PC-9 (cell line): ENCODE measurements at regions of chr6 and their contacts with region 1.

Region 1: DNA sequence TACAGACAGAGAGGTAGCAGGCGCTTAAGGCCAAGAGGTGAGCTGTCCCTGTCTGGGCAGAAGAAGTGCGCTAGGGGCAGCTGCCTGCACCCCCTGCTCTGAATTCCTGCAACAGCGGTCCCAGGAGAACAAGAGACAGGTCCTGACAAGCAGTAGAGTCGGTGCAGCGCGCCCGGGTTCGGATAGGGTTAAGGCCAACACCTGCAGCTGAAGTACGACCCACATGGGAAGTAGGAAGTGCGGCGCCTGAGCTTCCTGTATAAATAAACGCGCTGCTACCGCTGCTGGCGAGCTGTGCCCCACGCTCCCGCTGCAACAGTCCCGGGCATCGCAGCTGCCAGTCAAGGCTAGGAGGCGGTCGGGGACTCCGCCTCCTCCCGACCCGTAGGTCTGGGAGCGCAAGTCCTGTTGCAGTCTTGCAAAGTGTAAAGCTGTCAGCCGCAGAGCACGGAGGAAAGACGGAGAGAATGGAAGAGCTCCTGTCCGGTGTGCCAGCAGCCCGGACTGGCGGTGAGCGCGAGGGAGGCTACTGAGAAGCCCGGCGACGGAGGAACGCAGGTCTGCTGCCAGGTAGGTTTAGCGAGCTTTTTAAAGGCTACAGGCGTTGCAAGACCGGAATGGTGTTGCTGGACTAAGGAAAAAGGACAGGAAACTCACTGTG is at the start of gene RNF144B:
- DNase-seq: peak; percentile 87 to 89
- H3K4me3 ChIP-seq: peak within 1 kb of the TSS; percentile 80
- H3K27ac ChIP-seq: peak within 1 kb of the TSS; percentile 76
- H3K4me1 ChIP-seq: peaks cover 39% of the 10 kb centered on the region
- H3K27me3 ChIP-seq: no peaks in the 10 kb centered on the region
- CTCF ChIP-seq: no peak
- total RNA-seq, gene RNF144B: 26.2 and 34.5 TPM in 2 replicates

Region 2: DNA sequence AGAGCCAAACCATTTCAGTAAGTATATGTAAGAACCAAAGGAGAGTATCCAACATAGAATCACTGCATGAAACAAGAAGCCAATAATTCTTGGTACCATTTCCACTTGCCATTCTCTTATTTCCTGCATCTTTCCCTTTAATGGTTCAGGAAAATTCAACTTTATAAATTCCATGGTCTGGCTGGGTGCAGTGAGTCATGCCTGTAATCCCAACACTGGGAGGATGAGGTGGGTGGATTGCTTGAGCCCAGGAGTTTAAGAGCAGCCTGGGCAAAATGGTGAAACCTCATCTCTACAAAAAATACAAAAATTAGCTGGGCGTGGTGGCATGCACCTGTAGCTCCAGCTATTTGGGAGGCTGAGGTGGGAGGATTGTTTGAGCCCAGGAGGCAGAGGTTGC is 285.9 kb before region 1 on chr6:
- CTCF ChIA-PET with region 1: no interaction called
- POLR2A ChIA-PET with region 1: no interaction called
- intact Hi-C with region 1: no loop called
- DNase-seq: no peak
- H3K4me3 ChIP-seq: no peak overlapping the region
- H3K27ac ChIP-seq: no peak overlapping the region
- H3K4me1 ChIP-seq: peaks cover 5% of the 10 kb centered on the region; the same call in 1 of the 2 replicates
- H3K27me3 ChIP-seq: no peaks in the 10 kb centered on the region
- CTCF ChIP-seq: no peak

Region 3: GRCh38 chr6:18323935-18324705 is 63.1 kb before region 1 on chr6:
- CTCF ChIA-PET with region 1: interaction called, 4 read pairs
- POLR2A ChIA-PET with region 1: no interaction called
- intact Hi-C with region 1: loop called (anchors 2 kb)
- DNase-seq: peak; percentile 27 to 51
- H3K4me3 ChIP-seq: no peak overlapping the region
- H3K27ac ChIP-seq: no peak overlapping the region
- H3K4me1 ChIP-seq: no peaks in the 10 kb centered on the region
- H3K27me3 ChIP-seq: no peaks in the 10 kb centered on the region
- CTCF ChIP-seq: peak; percentile 85

Region 4: DNA sequence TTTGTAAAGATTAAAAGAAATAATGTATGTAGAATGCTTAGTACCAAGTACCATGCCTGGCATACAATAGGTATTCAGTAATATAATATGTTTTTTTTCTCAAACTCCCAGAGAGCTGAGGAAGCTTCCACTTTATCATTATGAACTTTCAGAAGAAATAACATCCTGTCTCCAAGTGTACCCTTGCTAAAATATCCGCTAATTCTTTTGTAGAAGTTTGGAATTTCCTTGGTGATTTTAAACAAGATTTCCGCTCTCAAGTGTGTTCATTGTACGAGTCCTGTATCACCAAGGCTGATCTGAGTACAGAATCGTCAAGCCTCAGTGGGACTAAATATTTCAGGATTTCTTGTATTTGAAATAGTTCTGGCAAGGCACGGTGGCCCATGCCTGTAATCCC is 16.2 kb before region 1 on chr6:
- CTCF ChIA-PET with region 1: no interaction called
- POLR2A ChIA-PET with region 1: interaction called, 18 read pairs
- intact Hi-C with region 1: no loop called
- DNase-seq: no peak
- H3K4me3 ChIP-seq: no peak overlapping the region
- H3K27ac ChIP-seq: no peak overlapping the region
- H3K4me1 ChIP-seq: peaks cover 4% of the 10 kb centered on the region; the same call in 1 of the 2 replicates
- H3K27me3 ChIP-seq: no peaks in the 10 kb centered on the region
- CTCF ChIP-seq: no peak

Region 5: GRCh38 chr6:18425197-18425596 is 38.0 kb after region 1 on chr6:
- CTCF ChIA-PET with region 1: no interaction called
- POLR2A ChIA-PET with region 1: interaction called, 5 read pairs
- intact Hi-C with region 1: loop called (anchors 1 kb)
- DNase-seq: peak; percentile 72 to 80
- H3K4me3 ChIP-seq: no peak overlapping the region
- H3K27ac ChIP-seq: peak overlapping the region; percentile 27
- H3K4me1 ChIP-seq: peaks cover 29% of the 10 kb centered on the region
- H3K27me3 ChIP-seq: no peaks in the 10 kb centered on the region
- CTCF ChIP-seq: no peak

Region 6: GRCh38 chr6:18473755-18474154 is 86.6 kb after region 1 on chr6:
- CTCF ChIA-PET with region 1: no interaction called
- POLR2A ChIA-PET with region 1: no interaction called
- intact Hi-C with region 1: no loop called
- DNase-seq: no peak
- H3K4me3 ChIP-seq: no peak overlapping the region
- H3K27ac ChIP-seq: no peak overlapping the region
- H3K4me1 ChIP-seq: no peaks in the 10 kb centered on the region
- H3K27me3 ChIP-seq: no peaks in the 10 kb centered on the region
- CTCF ChIP-seq: no peak

Region 7: GRCh38 chr6:18491308-18492045 is 104.3 kb after region 1 on chr6:
- CTCF ChIA-PET with region 1: no interaction called
- POLR2A ChIA-PET with region 1: no interaction called
- intact Hi-C with region 1: loop called (anchors 1 kb)
- DNase-seq: peak; percentile 33 to 76
- H3K4me3 ChIP-seq: no peak overlapping the region
- H3K27ac ChIP-seq: no peak overlapping the region
- H3K4me1 ChIP-seq: peaks cover 42% of the 10 kb centered on the region
- H3K27me3 ChIP-seq: no peaks in the 10 kb centered on the region
- CTCF ChIP-seq: no peak